AG04449 (cell line): ENCODE measurements at regions of chr16 and their contacts with region 1.

Region 1: GRCh38 chr16:14600164-14600563 is 29.9 kb downstream of the PARN start:
- DNase-seq: no peak
- H3K4me3 ChIP-seq: no peak overlapping the region
- CTCF ChIP-seq: peak; percentile 13

Region 2: GRCh38 chr16:14249291-14250032 is 350.7 kb before region 1 on chr16:
- CTCF ChIA-PET with region 1: interaction called, 55 read pairs
- POLR2A ChIA-PET with region 1: no interaction called
- DNase-seq: no peak
- H3K4me3 ChIP-seq: no peak overlapping the region
- CTCF ChIP-seq: peak; percentile 71

Region 3: DNA sequence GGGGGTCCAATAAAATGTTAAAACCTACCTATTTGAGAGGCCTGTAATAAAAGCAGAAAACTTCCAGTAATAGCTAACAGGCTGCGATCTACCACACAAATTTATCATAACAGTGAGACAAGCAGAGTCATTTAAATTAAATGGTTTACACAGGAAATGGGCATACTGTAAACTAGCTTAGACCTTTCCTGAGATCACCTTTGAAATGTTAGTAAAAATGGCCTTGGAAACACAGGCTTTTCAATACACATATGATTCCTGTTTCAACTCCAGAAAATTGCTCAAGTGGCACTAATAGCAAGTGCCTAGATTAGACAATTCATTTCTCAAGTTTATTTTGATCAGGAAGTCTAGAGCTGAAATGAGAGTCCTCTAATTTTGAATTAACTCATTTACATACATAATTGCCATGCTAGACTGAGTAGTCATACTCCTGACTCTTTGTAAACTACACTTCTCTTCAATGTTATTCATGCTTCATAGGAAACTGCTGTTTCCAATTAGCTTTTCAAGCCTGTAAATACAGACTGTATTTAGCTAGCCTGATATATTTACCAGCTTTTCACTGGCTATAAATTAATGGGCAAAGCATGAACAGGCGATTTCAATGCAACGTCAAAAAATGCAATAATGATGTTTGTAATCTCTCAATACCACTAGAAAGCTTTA is 13.4 kb before region 1 on chr16:
- CTCF ChIA-PET with region 1: interaction called, 28 read pairs
- POLR2A ChIA-PET with region 1: no interaction called
- DNase-seq: no peak
- H3K4me3 ChIP-seq: no peak overlapping the region
- CTCF ChIP-seq: no peak